HAP-1 (cell line): ENCODE measurements at regions of chr18 and their contacts with region 1.

Region 1: GRCh38 chr18:45690975-45691815 is 32.8 kb upstream of the SLC14A1 start:
- DNase-seq: peak; percentile 66 to 84
- H3K4me3 ChIP-seq: no peak overlapping the region
- H3K4me1 ChIP-seq: no peaks in the 10 kb centered on the region
- H3K27me3 ChIP-seq: peaks cover 4% of the 10 kb centered on the region; the same call in 1 of the 2 replicates

Region 2: DNA sequence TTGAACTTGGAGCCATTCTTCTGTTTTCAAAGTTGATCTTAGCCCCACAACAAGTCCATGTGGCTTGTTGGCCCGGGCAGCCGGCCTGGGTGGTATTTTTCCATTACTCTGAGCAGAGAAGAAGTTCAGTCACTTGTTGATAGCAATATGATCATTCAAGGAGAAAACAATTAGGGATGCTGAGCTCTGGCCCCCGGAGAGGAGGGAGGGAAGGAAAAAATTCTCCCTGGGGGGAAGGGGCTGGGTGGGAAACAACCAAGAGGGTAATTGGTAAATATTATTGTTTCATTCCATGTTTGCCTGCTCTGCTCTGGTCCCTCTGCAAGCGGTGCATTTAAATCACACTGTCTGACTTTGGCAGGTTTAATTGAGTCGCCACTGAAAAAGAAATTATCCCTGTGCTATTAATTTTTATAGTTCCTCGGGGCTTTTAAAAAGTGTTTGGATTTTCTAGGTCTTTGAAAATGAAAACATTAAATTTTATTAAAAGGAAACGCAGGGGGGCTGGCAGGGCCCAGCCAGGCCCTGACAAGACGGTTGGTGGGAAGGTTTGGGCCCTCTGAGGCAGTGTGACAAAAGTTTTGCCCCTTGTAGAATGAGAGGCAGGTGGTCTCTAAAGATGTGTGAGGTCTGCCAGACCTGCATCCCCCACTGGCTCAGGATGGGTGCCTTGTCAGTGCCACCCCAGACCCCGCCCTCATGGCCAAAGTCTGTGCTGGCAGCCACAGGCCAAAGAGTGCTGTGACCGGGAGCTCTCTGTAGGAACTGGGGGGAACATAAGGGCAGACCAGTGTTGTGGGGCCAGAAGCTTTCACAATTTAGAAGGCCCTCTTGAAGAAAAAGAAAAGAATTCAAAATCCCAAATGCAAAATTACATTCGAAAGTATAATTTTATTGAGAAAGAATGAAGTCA is 128.4 kb before region 1 on chr18:
- in situ Hi-C with region 1: no loop called
- DNase-seq: no peak
- H3K4me3 ChIP-seq: no peak overlapping the region
- H3K4me1 ChIP-seq: no peaks in the 10 kb centered on the region
- H3K27me3 ChIP-seq: no peaks in the 10 kb centered on the region

Region 3: GRCh38 chr18:46073474-46074331 is 382.5 kb after region 1 on chr18:
- in situ Hi-C with region 1: loop called (anchors 5 kb)
- DNase-seq: peak; percentile 68 to 73
- H3K4me3 ChIP-seq: no peak overlapping the region
- H3K4me1 ChIP-seq: peaks cover 5% of the 10 kb centered on the region; the same call in 1 of the 2 replicates
- H3K27me3 ChIP-seq: no peaks in the 10 kb centered on the region